PC-3 (cell line): ENCODE measurements at regions of chr11 and their contacts with region 1.

Region 1: DNA sequence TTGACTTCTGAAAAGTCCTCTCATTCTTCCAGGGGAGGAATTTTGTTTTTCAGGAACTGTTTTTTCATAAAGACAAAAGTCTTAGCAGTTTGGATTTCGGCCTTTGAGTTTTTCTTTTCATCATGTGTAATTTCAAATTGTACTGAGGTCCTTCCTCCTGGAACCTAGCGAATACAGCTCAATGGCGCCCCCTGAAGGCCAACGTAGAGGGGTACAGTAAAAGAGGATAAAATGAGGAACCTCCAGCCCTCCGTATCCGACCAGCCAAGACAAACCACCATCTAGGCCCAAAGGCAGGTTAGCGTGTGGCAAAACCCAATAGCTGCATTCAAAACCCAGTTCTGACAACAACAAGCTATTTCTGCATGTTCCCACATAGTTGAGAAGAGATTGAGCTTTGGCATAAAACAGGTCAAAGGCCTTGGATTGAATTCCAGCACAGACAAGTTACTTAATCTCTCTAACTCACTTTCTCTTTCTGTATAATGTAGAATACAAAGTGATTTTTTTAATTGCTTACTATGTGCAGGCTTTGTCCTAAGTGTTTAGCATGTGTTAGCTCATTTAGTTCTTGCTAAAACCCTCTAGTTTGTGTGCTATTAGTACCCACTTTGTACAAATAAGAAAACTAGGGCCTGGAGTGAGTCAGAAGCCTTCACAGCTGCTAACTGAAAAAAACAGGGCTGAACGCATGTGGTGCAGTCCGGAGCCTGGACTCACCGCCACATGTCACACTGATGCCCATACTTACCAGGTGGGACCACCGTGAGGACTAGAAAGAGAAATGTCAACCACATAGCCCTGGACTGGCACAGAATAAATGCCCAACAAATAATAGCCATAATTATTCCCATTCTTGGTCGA is 43.2 kb upstream of the ETS1 start:
- DNase-seq: peak; percentile 92
- ATAC-seq: peak; percentile 94
- H3K4me3 ChIP-seq: no peak overlapping the region; the same call in 1 of the 2 replicates
- H3K27ac ChIP-seq: no peak overlapping the region
- H3K4me1 ChIP-seq: peaks cover 17% of the 10 kb centered on the region
- H3K27me3 ChIP-seq: no peaks in the 10 kb centered on the region
- CTCF ChIP-seq: peak; percentile 98

Region 2: DNA sequence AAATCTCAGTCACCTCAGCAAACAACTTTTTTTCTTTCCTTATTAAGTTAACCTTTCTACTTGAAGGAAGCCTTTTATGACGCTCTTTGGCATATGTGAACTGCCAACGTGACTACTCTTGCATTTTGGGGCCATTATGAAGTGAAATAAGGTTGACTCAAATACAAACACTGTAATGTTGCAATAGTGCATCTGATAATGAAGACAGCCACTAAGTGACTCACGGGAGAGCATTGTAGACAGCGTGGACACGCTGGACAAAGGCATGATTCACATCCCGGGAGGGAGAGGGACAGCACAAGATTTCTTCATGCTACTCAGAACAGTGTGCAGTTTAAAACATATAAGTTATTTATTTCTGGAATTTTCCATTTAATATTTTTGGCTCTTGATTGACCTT is 604.0 kb before region 1 on chr11:
- CTCF ChIA-PET with region 1: no interaction called
- POLR2A ChIA-PET with region 1: no interaction called
- intact Hi-C with region 1: loop called (anchors 1 kb)
- DNase-seq: peak; percentile 98
- ATAC-seq: peak; percentile 85
- H3K4me3 ChIP-seq: no peak overlapping the region
- H3K27ac ChIP-seq: peak overlapping the region; percentile 59
- H3K4me1 ChIP-seq: peaks cover 30% of the 10 kb centered on the region
- H3K27me3 ChIP-seq: no peaks in the 10 kb centered on the region
- CTCF ChIP-seq: no peak

Region 3: DNA sequence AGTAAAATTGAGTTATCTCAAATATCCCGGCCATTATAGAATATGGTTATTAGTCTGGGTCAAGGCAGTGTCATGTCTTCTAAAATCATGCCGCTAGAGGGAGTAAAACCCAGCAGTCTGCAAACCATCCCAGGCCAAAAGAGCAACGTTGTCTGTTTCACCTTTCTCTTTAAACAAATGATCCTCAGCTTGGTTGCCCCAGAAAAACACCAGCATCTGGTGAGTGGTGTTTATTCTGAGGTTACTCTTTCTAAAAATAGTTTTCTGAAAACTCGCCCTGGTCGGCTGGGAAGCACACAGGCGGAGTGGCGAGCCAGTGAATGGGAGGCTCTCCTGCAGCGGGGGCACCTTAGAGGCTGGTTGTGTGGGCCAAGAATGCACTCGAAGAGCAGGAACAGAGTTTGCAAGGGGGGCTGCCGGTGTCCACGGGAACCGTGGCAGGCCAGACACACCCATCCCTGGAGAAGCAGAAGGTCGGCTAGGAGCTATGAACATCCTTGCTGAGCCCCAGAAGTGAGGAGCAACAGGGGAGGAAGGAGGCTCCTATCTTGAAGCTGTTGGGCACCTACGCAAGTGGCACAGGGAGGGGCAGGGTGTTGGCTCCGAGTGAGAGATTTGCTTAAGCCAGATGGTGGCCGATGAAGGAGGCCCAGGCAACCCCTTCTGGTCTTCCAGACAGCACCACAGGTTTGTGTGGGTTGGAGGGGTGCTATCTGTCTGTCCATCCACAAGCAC is 340.3 kb before region 1 on chr11:
- CTCF ChIA-PET with region 1: interaction called, 5 read pairs
- POLR2A ChIA-PET with region 1: no interaction called
- intact Hi-C with region 1: loop called (anchors 1 kb)
- DNase-seq: peak; percentile 94
- ATAC-seq: peak; percentile 82
- H3K4me3 ChIP-seq: no peak overlapping the region
- H3K27ac ChIP-seq: peak overlapping the region; percentile 53
- H3K4me1 ChIP-seq: peaks cover 39% of the 10 kb centered on the region
- H3K27me3 ChIP-seq: no peaks in the 10 kb centered on the region
- CTCF ChIP-seq: peak; percentile 97

Region 4: GRCh38 chr11:128482512-128483191 is 147.9 kb before region 1 on chr11:
- CTCF ChIA-PET with region 1: interaction called, 6 read pairs
- POLR2A ChIA-PET with region 1: no interaction called
- intact Hi-C with region 1: loop called (anchors 1 kb)
- DNase-seq: no peak
- ATAC-seq: no peak
- H3K4me3 ChIP-seq: no peak overlapping the region
- H3K27ac ChIP-seq: no peak overlapping the region
- H3K4me1 ChIP-seq: no peaks in the 10 kb centered on the region
- H3K27me3 ChIP-seq: no peaks in the 10 kb centered on the region
- CTCF ChIP-seq: no peak

Region 5: DNA sequence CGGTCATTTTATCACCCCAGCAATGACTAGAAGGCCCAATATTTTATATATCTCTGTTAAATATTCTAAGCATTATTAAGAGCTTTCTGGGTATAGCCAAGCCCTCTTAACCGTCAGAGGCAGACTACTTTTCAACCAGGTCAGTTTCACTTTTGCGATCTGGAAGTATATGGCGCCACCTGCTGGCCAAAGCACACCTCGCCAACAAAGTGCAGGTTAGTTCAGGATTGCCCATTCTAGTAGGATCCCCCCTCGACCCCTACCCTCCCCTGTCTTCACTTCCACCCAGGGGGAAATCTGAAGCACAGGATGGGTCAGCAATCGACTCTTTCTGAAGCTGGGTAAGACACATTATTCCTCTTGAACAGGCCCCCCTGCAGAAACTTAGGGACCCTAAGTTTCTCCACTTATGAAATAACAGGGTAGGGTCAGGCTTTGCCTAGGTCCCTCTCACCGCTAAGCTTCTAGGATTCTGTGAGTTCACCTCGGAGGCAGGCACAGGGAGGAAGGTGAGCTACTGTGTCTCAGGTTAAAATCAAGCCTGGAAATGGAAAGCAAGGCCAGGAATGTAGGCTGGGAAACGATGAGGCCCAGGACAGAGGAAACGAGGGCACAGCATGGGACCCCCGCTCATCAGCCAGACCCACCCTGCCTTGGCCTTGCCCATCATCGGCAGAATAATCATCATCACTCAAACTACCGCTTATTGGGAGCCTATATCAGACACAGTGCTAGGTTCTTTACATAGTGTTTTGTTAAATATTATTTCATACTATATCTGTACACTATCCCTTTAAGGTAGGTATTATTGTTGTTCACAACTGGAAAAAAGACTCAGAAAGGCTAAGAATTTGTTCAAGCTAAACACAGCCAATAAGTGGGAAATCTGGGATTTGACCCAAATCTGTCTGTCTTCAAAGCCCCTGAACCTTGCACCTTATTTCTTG is 200.8 kb after region 1 on chr11:
- CTCF ChIA-PET with region 1: interaction called, 7 read pairs
- POLR2A ChIA-PET with region 1: no interaction called
- intact Hi-C with region 1: loop called (anchors 1 kb)
- DNase-seq: peak; percentile 91
- ATAC-seq: peak; percentile 94
- H3K4me3 ChIP-seq: peak overlapping the region; percentile 50; the same call in 1 of the 2 replicates
- H3K27ac ChIP-seq: no peak overlapping the region
- H3K4me1 ChIP-seq: peaks cover 18% of the 10 kb centered on the region; the same call in 1 of the 2 replicates
- H3K27me3 ChIP-seq: no peaks in the 10 kb centered on the region
- CTCF ChIP-seq: peak; percentile 97